CD4-positive, alpha-beta memory T cell (primary cell): ENCODE measurements at regions of chr2 and their contacts with region 1.

Region 1: GRCh38 chr2:10434886-10435819 is 13.0 kb downstream of the ODC1 start:
- DNase-seq: peak in 4 of 5 donors; percentile 48 to 77 (median 66)
- H3K4me3 ChIP-seq: no peak overlapping the region
- H3K4me3 Mint-ChIP-seq: peak overlapping the region in 2 of 8 donors; percentile 15 to 24
- H3K27ac ChIP-seq: no peak overlapping the region
- H3K27ac Mint-ChIP-seq: peak overlapping the region in 2 of 7 donors; percentile 38 to 75
- H3K4me1 ChIP-seq: peaks cover 15% of the 10 kb centered on the region
- H3K4me1 Mint-ChIP-seq: peaks cover 4 to 13% (median 8%) of the 10 kb centered on the region in 4 donors
- H3K27me3 ChIP-seq: no peaks in the 10 kb centered on the region
- H3K27me3 Mint-ChIP-seq: peaks cover 0 to 5% of the 10 kb centered on the region in 2 donors

Region 2: DNA sequence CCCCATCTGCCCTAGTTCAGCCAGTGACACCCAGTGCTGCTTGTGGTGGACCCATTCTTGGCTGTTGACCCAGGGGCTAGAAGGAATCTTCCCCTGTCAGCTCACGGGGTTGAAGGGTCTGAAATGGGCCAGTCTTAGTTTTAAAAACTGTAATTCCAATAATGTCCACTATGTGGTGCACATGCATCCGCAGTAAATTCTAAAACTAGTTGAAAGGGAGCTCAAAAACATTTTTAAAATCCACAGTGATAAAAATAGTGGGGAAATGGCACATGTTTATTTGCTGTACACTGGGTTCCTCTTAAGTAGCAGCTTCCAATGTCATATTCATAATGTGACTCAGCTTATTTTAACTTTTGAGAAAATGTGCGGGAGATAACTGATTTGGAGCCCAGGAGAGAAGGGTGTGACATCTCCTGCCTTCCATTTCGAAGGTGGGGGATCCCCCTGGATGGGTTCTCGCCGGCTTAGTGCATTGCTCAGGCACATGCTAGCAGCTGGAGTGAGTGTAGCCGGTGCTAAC is 450.9 kb before region 1 on chr2:
- CTCF ChIA-PET with region 1: interaction called, 6 read pairs
- POLR2A ChIA-PET with region 1: no interaction called
- intact Hi-C with region 1: loop called (anchors 10 kb)
- DNase-seq: peak in 4 of 5 donors; percentile 54 to 60 (median 59)
- H3K4me3 ChIP-seq: no peak overlapping the region
- H3K4me3 Mint-ChIP-seq: peak overlapping the region in 1 of 8 donors; percentile 1
- H3K27ac ChIP-seq: no peak overlapping the region
- H3K27ac Mint-ChIP-seq: peak overlapping the region in 1 of 7 donors; percentile 73
- H3K4me1 ChIP-seq: peaks cover 14% of the 10 kb centered on the region
- H3K4me1 Mint-ChIP-seq: peaks cover 10 to 14% (median 11%) of the 10 kb centered on the region in 4 donors
- H3K27me3 ChIP-seq: no peaks in the 10 kb centered on the region
- H3K27me3 Mint-ChIP-seq: peaks cover 0 to 2% of the 10 kb centered on the region in 2 donors

Region 3: GRCh38 chr2:10080536-10081304 is 354.4 kb before region 1 on chr2:
- CTCF ChIA-PET with region 1: interaction called, 16 read pairs
- POLR2A ChIA-PET with region 1: no interaction called
- intact Hi-C with region 1: no loop called
- DNase-seq: peak; percentile 36 to 65 (median 60)
- H3K4me3 ChIP-seq: peak overlapping the region in 1 of 2 donors; percentile 32
- H3K4me3 Mint-ChIP-seq: peak overlapping the region; percentile 70 to 89 (median 80)
- H3K27ac ChIP-seq: no peak overlapping the region
- H3K27ac Mint-ChIP-seq: peak overlapping the region in 6 of 7 donors; percentile 43 to 84 (median 68)
- H3K4me1 ChIP-seq: peaks cover 24% of the 10 kb centered on the region
- H3K4me1 Mint-ChIP-seq: peaks cover 8 to 20% (median 11%) of the 10 kb centered on the region in 4 donors
- H3K27me3 ChIP-seq: peaks cover 45% of the 10 kb centered on the region
- H3K27me3 Mint-ChIP-seq: peaks cover 52 to 60% of the 10 kb centered on the region in 2 donors

Region 4: DNA sequence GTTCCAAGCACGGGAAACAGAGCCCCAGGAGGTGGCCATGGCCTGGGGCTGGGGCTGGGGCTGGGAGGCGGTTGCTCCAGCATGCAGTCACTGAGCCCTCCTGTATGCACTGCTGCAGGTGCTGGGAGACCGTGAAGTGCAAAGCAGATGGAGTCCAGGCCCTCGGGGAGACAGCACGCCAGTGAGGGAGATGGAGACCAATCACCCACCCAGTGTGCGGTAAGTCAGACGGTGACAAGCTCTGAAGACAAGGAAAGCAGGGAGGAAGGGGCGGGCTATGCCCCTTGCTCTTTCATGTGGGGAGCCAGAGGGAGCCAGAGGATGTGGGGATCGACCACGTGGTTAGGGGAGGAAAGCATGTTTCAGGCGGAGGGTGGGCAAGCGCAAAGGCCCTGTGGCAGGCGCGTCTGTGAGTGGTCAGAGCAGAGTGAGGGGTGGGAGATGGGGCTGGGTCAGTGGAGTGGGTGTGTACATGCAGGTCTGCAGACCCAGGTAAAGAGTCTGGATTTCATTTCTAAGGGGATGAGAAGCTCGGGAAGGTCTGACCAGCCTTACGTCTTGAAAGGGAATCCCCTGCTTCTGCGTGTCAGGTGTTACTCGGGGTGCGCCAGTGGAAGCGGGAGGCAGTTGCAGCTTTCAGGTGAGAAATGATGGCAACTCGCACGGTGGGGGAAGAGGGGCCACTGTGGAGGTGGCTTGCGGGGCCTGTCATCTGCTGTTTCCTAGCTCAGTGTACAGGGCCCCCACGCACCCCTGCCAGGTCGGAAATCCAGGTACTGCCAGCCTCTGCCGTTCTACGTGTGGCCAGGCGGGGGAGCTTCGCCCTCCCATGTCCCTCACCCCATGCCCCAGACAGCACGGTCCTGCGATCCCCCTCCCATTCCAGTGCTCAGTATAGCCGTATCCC is 293.2 kb before region 1 on chr2:
- CTCF ChIA-PET with region 1: interaction called, 23 read pairs
- POLR2A ChIA-PET with region 1: no interaction called
- intact Hi-C with region 1: no loop called
- DNase-seq: peak; percentile 40 to 56 (median 47)
- H3K4me3 ChIP-seq: no peak overlapping the region
- H3K4me3 Mint-ChIP-seq: peak overlapping the region in 6 of 8 donors; percentile 32 to 75 (median 64)
- H3K27ac ChIP-seq: no peak overlapping the region
- H3K27ac Mint-ChIP-seq: peak overlapping the region; percentile 4 to 81 (median 70)
- H3K4me1 ChIP-seq: peaks cover 20% of the 10 kb centered on the region
- H3K4me1 Mint-ChIP-seq: peaks cover 16 to 27% (median 19%) of the 10 kb centered on the region in 4 donors
- H3K27me3 ChIP-seq: no peaks in the 10 kb centered on the region
- H3K27me3 Mint-ChIP-seq: no peaks in the 10 kb centered on the region

Region 5: GRCh38 chr2:10302479-10303180 is 132.5 kb before region 1 on chr2 and contains the start of gene HPCAL1:
- CTCF ChIA-PET with region 1: interaction called, 13 read pairs
- POLR2A ChIA-PET with region 1: interaction called, 3 read pairs
- intact Hi-C with region 1: no loop called
- DNase-seq: peak; percentile 79 to 88 (median 85)
- H3K4me3 ChIP-seq: peak within 1 kb of the TSS; percentile 75 to 77
- H3K4me3 Mint-ChIP-seq: peak within 1 kb of the TSS; percentile 97 to 100 (median 98)
- H3K27ac ChIP-seq: peak within 1 kb of the TSS; percentile 65
- H3K27ac Mint-ChIP-seq: peak within 1 kb of the TSS; percentile 87 to 96 (median 94)
- H3K4me1 ChIP-seq: peaks cover 66% of the 10 kb centered on the region
- H3K4me1 Mint-ChIP-seq: peaks cover 56 to 86% (median 72%) of the 10 kb centered on the region in 4 donors
- H3K27me3 ChIP-seq: no peaks in the 10 kb centered on the region
- H3K27me3 Mint-ChIP-seq: no peaks in the 10 kb centered on the region
- total RNA-seq, gene HPCAL1: 77.1 to 80.7 TPM

Region 6: GRCh38 chr2:10548626-10549025 is 113.5 kb after region 1 on chr2:
- CTCF ChIA-PET with region 1: no interaction called
- POLR2A ChIA-PET with region 1: no interaction called
- intact Hi-C with region 1: no loop called
- DNase-seq: no peak
- H3K4me3 ChIP-seq: no peak overlapping the region
- H3K4me3 Mint-ChIP-seq: peak overlapping the region in 1 of 8 donors; percentile 39
- H3K27ac ChIP-seq: no peak overlapping the region
- H3K27ac Mint-ChIP-seq: no peak overlapping the region
- H3K4me1 ChIP-seq: peaks cover 13% of the 10 kb centered on the region
- H3K4me1 Mint-ChIP-seq: peaks cover 3 to 26% (median 12%) of the 10 kb centered on the region in 4 donors
- H3K27me3 ChIP-seq: peaks cover 8% of the 10 kb centered on the region
- H3K27me3 Mint-ChIP-seq: peaks cover 12 to 21% of the 10 kb centered on the region in 2 donors

Region 7: DNA sequence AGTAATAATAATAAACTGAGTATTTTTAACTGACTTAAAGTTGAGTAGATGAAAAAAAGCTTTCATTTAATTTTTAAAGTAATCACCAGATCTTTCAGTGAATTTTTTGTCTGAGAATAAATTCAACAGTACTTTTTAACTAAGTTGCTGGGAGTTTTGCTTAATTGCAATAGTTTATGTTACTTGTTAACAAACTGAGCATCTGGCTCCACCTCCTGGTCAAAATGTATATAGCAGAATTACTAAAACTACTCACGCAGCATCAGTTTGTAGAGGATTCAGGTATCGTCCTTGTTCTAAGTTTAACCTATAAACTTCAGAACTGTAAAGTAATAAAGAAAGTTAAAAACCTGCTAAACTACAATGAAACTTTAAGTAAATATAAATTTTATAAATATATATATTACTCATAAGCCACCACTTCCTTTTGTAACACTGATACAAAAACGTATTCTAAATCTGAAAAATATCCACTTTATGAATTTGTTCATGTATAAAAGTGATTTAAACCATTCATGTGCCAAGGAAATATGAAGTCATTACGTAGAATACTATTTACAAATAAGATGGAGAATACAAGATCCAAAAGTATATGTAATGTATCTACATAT is 233.4 kb after region 1 on chr2:
- CTCF ChIA-PET with region 1: interaction called, 10 read pairs
- POLR2A ChIA-PET with region 1: no interaction called
- intact Hi-C with region 1: no loop called
- DNase-seq: peak; percentile 43 to 63 (median 60)
- H3K4me3 ChIP-seq: no peak overlapping the region
- H3K4me3 Mint-ChIP-seq: no peak overlapping the region
- H3K27ac ChIP-seq: no peak overlapping the region
- H3K27ac Mint-ChIP-seq: no peak overlapping the region
- H3K4me1 ChIP-seq: no peaks in the 10 kb centered on the region
- H3K4me1 Mint-ChIP-seq: peaks cover 0 to 4% (median under 1%) of the 10 kb centered on the region in 4 donors
- H3K27me3 ChIP-seq: no peaks in the 10 kb centered on the region
- H3K27me3 Mint-ChIP-seq: no peaks in the 10 kb centered on the region